Posterior vena cava (tissue), 2 donors: ENCODE measurements at regions of chr6 and their contacts with region 1.

Region 1: DNA sequence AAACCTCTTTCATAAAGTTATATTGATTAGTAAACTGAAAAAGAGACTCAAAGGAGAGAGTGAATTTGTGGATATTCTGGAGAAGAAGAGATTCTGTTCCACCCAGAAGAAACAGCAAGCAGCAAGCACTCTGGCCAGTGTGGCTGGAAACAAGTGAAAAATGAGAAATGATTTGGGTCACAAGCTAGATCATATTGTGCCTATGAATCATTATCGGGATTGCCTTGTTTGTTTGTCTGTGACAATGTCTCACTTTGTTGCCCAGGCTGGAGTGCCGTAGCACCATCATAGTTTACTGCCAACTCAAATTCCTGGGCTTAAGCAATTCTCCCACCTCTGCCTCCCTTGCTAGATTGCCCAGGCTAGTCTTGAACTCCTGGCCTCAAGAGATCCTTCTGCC is 106.5 kb upstream of the LOC128125822 start:
- DNase-seq: no peak

Region 2: DNA sequence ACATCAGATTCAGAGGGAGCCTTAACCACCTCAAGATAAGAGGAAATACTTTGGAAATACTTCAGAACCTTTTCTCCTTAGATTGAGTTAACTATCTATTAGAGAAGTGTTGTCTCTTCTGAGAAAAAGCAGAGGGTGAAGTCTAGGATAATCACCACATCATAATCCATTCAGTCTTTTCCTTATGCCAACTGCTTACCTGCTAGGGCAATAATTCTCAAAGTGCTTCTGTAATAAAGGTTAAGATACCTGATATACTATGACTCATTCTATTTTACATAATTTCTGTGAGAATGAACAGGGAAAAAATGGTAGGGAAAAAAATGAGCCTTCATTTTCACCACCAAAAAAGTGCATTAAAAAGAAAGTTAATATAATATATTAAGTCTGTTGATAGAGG is 36.4 kb after region 1 on chr6:
- intact Hi-C with region 1: loop called in 1 of 2 experiments (anchors 1 kb)
- DNase-seq: no peak

Region 3: DNA sequence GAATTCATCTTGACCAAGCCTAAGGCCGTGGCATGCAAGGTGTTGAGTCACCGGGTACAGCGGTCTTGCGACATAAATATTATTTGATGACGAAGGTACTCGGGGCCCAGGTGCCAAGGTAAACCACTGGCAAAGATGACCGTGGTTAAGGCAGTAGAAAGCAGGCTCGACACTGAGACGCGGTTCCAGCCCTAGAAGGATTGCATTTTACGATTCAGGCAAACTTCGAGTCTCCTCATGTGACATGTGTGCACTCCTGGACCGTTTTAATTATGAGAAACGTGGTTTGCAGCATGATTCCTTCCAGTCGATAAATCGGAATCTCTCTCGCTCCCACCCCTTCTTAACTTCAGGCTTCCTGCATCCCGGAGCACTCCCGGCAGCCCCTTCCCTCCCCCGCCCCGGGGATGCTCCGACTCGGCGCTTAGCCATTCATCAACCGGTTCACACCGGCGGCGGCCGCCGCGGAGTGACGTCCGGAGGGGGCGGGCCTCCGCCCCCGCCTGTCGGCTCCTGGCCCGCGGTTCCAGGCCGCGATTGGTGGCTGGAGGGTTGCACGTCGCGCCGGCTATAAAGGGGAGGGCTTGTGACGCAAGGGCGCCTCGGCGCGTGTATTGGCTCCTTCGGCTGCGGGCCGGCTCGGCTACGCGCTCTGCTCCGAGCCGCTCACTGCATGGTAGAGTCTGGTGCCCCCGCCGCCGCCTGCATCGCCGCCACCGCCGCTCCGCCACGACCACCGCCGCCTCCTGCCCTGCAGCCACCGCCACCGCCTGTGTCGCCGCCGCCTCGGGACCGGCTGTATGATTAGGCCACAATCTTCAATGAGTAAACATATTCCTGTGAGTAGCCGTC is 106.4 kb after region 1 on chr6 and contains the starts of genes LOC128125822 and PTP4A1:
- intact Hi-C with region 1: no loop called
- DNase-seq: peak; percentile 100
- total RNA-seq, gene PTP4A1: 18.2 to 27.5 TPM